ENCODE measurements at regions of chr11 and their contacts with region 1.

Region 1: GRCh38 chr11:123261345-123262106 is 66.5 kb upstream of the CLMP start:
- DNase-seq: no peak
- H3K4me3 ChIP-seq: 0 out of 2 replicates have a peak overlapping the region, but pooled peaks have one; percentile 8
- CTCF ChIP-seq: peak; percentile 94

Region 2: GRCh38 chr11:123054301-123055065 is 207.0 kb before region 1 on chr11:
- CTCF ChIA-PET with region 1: interaction called, 11 read pairs
- POLR2A ChIA-PET with region 1: interaction called, 3 read pairs
- DNase-seq: no peak
- H3K4me3 ChIP-seq: no peak overlapping the region
- CTCF ChIP-seq: peak; percentile 58

Region 3: GRCh38 chr11:123103326-123103980 is 158.1 kb before region 1 on chr11:
- CTCF ChIA-PET with region 1: interaction called, 605 read pairs
- POLR2A ChIA-PET with region 1: interaction called, 6 read pairs
- DNase-seq: peak; percentile 45
- H3K4me3 ChIP-seq: no peak overlapping the region
- CTCF ChIP-seq: peak; percentile 48

Region 4: DNA sequence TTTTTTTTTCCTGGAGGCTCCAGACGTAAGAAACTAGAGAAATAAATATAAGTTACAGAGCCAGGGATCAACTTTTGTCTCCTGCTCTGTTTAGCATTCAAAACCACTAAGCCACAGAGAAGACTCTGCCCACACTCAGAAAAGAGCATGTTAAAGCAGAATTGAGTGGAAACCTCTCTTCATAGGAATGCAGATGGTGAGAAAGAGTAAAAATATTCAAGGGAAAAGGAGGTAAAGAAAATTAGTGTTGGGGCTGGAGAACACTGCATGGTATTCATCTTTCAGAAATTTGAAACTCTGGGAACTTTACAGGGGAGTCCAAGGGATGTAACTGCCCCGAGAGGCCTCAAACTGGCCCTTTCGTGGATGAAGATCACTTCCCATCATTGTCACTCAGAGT is 131.6 kb before region 1 on chr11:
- CTCF ChIA-PET with region 1: interaction called, 10 read pairs
- POLR2A ChIA-PET with region 1: no interaction called
- DNase-seq: peak; percentile 65
- H3K4me3 ChIP-seq: no peak overlapping the region
- CTCF ChIP-seq: no peak

Region 5: GRCh38 chr11:123174196-123175183 is 87.0 kb before region 1 on chr11:
- CTCF ChIA-PET with region 1: interaction called, 16 read pairs
- POLR2A ChIA-PET with region 1: no interaction called
- DNase-seq: peak; percentile 98
- H3K4me3 ChIP-seq: no peak overlapping the region
- CTCF ChIP-seq: no peak

Region 6: GRCh38 chr11:123272565-123272964 is 11.0 kb after region 1 on chr11:
- CTCF ChIA-PET with region 1: interaction called, 57 read pairs
- POLR2A ChIA-PET with region 1: interaction called, 3 read pairs
- DNase-seq: no peak
- H3K4me3 ChIP-seq: no peak overlapping the region
- CTCF ChIP-seq: no peak

Region 7: DNA sequence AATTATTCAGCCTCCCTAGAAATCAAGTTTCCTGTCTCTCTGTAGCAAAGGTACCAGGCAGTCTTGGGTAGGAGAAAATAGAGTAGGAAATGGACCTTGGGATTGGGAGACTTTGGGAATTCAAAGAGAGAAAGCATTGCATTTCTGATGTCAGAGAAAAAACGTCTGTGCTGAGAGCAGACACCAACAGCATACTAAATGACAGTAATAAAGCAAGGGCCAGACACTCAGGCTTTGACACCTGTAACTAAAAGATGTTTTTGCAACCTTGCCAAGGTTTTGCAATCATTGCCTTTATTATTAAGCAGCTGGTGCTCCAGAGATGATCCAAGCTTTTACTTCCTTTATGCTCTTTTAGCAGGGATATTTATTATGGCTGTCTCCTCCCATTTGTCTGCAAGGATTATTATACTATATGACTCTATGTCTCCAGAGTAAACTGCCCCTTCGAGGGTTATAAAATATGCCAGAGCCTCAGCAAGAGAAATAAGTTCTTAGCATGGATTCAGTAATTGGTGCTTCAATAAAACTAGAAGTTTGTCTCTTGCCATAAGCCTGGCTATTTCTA is 83.3 kb after region 1 on chr11:
- CTCF ChIA-PET with region 1: no interaction called
- POLR2A ChIA-PET with region 1: no interaction called
- DNase-seq: no peak
- H3K4me3 ChIP-seq: no peak overlapping the region
- CTCF ChIP-seq: no peak

Measured in AG04449 (cell line).